ENCODE measurements at regions of chr5 and their contacts with region 1.

Region 1: DNA sequence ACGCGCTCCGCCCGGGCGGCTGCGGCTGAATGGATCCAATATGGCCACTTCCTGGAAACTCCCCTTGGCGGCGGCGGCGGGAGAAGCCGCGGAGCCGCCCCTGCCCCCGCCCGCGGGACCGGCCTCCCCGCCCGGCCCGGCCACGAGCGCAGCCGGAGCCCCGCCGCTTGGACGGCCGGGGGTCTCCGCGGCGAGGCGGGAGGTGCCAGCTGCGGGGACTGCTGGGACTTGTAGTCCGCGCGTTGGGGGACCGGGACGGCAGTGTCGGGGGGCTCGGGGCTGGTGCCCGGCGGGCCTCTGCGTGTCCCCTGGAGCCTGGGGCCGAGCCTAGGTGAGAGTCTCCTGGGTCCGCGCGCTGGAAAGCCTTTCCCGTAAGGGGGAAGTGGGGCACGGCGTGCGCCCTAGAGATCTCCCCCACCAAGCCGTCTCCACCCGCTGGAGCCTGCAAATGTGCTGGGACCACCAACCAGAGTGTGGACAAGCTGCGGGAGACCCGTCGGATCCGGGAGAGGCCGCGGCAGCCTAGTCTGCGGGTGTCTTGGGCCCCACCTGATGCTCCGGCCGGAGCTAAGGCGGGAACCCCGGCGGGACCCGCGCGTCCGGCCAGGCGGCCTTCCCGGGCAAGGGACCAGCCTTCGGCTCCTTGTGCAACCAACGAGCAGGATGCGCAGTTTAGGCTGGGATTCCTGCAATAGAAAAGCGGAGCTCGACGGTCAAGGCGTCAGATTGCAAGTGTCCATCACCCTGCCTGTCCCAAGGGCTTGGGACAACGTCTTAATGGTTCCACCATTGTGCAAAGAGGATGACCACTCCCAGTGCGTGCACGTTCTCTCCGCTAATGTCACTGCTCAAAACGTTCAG is at the start of gene SEPTIN8:
- DNase-seq: peak in 40 of 42 donors; percentile 48 to 89 (median 74)

Region 2: GRCh38 chr5:132490486-132491367 is 286.7 kb before region 1 on chr5 and contains the start of gene IRF1:
- intact Hi-C with region 1: no loop called
- DNase-seq: peak; percentile 83 to 98 (median 94)

Region 3: DNA sequence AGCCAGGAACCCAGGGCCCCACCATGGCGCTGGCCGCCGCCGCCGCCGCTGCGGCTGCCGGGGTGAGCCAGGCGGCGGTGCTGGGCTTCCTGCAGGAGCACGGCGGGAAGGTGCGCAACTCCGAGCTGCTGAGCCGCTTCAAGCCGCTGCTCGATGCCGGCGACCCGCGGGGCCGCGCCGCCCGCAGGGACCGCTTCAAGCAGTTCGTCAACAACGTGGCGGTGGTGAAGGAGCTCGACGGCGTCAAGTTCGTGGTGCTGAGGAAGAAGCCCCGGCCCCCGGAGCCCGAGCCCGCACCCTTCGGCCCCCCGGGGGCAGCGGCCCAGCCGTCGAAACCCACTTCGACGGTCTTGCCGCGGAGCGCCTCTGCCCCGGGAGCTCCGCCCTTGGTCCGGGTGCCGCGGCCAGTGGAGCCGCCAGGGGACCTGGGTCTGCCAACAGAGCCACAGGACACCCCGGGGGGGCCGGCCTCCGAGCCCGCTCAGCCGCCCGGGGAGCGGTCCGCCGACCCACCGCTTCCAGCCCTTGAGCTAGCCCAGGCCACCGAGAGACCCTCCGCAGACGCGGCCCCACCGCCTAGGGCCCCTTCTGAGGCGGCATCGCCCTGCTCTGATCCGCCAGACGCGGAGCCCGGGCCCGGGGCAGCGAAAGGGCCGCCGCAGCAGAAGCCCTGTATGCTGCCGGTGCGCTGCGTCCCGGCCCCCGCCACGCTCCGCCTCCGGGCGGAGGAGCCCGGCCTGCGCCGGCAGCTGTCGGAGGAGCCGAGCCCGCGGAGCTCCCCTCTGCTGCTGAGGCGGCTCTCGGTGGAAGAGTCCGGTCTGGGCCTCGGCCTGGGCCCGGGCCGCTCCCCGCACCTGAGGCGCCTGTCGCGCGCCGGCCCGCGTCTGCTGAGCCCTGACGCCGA is 36.4 kb after region 1 on chr5:
- intact Hi-C with region 1: loop called (anchors 5 kb)
- DNase-seq: peak in 41 of 42 donors; percentile 47 to 89 (median 77)